ENCODE measurements at regions of chr20 and their contacts with region 1.

Region 1: GRCh38 chr20:3820048-3820900 is at the start of gene AP5S1:
- DNase-seq: peak; percentile 88
- H3K4me3 ChIP-seq: peak within 1 kb of the TSS; percentile 71 to 74 (median 72)
- H3K27ac ChIP-seq: peak within 1 kb of the TSS; percentile 91 to 99 (median 98)
- H3K4me1 ChIP-seq: peaks cover 21 to 48% (median 25%) of the 10 kb centered on the region in 3 donors
- H3K27me3 ChIP-seq: no peaks in the 10 kb centered on the region
- CTCF ChIP-seq: peak; percentile 97 to 100 (median 98)
- POLR2A ChIP-seq: peak in 2 of 4 donors; percentile 36 to 66
- total RNA-seq, gene AP5S1: 5.8 to 12.8 (median 10.4) TPM

Region 2: DNA sequence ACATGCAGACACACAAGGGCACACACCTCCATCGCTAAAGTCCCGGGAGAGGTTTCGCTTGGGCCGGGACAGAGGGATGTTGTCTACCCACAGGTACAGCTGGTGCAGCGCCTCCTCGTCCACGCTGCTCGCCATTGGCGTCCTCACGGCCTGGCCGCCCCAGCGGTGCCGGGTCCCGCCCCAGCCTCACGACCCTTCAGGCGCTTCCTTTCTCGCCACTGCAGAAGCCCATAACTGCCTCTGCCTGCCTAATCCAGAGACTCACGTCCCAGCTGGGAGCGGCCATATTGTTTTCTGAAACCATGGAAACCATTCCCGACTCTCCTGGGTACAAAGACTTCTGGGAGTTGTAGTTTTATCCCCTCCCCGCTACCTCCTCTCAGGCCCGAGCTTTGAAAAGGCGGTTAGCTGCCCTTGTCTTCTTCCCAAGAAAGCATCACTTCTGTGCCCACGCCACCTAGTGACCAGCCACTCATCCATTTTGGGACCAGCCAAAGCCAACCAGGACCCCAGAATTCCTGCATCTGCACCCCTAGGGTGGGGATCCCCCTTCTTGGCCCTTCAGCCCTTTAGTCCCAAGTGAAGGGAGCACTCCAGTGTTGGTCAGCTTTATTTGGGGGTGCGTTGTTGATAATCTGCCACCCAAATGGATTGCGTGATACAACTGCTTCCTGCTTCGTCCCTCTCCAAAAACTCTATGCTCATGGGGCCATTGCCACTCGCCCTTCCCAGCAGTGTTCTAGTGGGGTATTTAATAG is 38.9 kb before region 1 on chr20 and contains the start of gene SPEF1:
- intact Hi-C with region 1: loop called (anchors 5 kb)
- DNase-seq: no peak
- H3K4me3 ChIP-seq: peak within 1 kb of the TSS; percentile 17 to 59 (median 32)
- H3K27ac ChIP-seq: peak within 1 kb of the TSS; percentile 33 to 91 (median 59)
- H3K4me1 ChIP-seq: peaks cover 54 to 77% (median 55%) of the 10 kb centered on the region in 3 donors
- H3K27me3 ChIP-seq: no peaks in the 10 kb centered on the region
- CTCF ChIP-seq: peak in 5 of 6 experiments; percentile 18 to 40 (median 29)
- POLR2A ChIP-seq: no peak
- total RNA-seq, gene SPEF1: 0.19 TPM in 1 of 4 donors, not detected in the others

Measured in esophagus squamous epithelium (tissue), 5 donors.